A673 (cell line): ENCODE measurements at regions of chr12 and their contacts with region 1.

Region 1: DNA sequence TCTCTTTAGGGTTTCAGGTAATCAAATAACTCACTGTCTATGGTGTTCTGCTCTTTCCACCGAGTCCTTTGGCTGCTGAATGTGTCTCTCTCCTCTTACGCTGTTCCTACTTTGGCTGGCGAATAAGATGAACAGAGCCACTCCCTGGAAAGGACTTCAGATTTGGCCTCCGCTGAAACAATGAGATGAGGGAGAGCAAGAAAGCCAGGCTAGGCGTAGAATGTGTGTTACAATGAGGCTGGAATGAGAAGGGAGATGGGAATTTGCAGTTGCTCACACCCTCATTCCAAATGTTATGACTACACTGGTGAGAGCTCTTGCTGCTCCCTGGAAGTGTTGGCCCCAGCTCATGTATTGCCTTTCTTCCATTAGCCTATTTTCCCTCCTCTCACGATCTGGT is at the start of gene MFAP5:
- DNase-seq: no peak
- H3K4me3 ChIP-seq: no peak within 1 kb of the TSS
- H3K27ac ChIP-seq: no peak within 1 kb of the TSS
- H3K4me1 ChIP-seq: no peaks in the 10 kb centered on the region
- H3K27me3 ChIP-seq: peaks cover 4% of the 10 kb centered on the region
- CTCF ChIP-seq: no peak
- total RNA-seq, gene MFAP5: 0.52 and 1.7 TPM in 2 replicates

Region 2: GRCh38 chr12:8860165-8860961 is 197.8 kb after region 1 on chr12:
- CTCF ChIA-PET with region 1: interaction called, 14 read pairs
- POLR2A ChIA-PET with region 1: no interaction called
- intact Hi-C with region 1: no loop called
- DNase-seq: peak; percentile 80
- H3K4me3 ChIP-seq: no peak overlapping the region
- H3K27ac ChIP-seq: no peak overlapping the region
- H3K4me1 ChIP-seq: peaks cover 7% of the 10 kb centered on the region
- H3K27me3 ChIP-seq: no peaks in the 10 kb centered on the region
- CTCF ChIP-seq: peak; percentile 81

Region 3: DNA sequence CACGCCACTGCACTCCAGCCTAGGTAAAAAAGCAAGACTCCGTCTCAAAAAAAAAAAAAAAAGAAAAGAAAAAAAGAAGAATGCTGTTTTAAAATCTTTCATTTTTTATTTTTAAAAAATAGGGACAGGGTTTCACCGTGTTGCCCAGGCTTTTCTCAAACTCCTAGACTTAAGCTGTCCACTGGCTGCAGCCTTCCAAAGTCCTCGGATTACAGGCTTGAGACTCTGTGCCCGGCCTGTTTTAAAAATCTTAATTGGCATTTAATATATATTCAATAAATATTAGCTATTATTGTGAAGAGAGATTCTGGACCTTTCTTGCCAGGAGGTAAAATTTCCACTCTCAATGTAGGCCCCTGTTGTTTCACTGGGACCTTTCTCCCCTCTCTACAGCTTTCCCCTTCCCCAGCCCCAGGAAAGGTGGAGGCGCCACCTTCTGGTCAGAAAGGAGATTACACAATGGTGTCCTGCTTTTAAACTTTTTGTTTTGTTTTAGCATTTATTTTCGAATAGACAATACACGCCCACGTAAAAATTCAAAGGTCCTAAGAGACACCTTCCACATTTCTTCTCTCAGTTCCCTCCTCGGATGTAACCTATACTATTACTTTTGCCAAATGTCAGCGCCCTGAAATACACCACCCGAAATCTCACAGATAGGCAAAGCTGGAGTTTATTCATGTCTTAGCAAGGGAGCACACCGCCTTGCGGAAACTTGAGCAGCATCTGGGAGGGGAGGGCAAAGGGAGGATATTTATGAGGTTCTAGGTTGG is 227.9 kb after region 1 on chr12:
- CTCF ChIA-PET with region 1: interaction called, 24 read pairs
- POLR2A ChIA-PET with region 1: no interaction called
- intact Hi-C with region 1: no loop called
- DNase-seq: peak; percentile 72
- H3K4me3 ChIP-seq: peak overlapping the region; percentile 43
- H3K27ac ChIP-seq: no peak overlapping the region
- H3K4me1 ChIP-seq: no peaks in the 10 kb centered on the region
- H3K27me3 ChIP-seq: no peaks in the 10 kb centered on the region
- CTCF ChIP-seq: peak; percentile 94

Region 4: GRCh38 chr12:9049520-9050133 is 387.0 kb after region 1 on chr12:
- CTCF ChIA-PET with region 1: interaction called, 31 read pairs
- POLR2A ChIA-PET with region 1: no interaction called
- intact Hi-C with region 1: loop called (anchors 5 kb)
- DNase-seq: peak; percentile 59
- H3K4me3 ChIP-seq: no peak overlapping the region
- H3K27ac ChIP-seq: no peak overlapping the region
- H3K4me1 ChIP-seq: no peaks in the 10 kb centered on the region
- H3K27me3 ChIP-seq: no peaks in the 10 kb centered on the region
- CTCF ChIP-seq: peak; percentile 73